PC-3 (cell line): ENCODE measurements at regions of chr20 and their contacts with region 1.

Region 1: GRCh38 chr20:3173610-3174441 is 477 bp upstream of the LZTS3 start:
- DNase-seq: peak; percentile 91
- ATAC-seq: peak; percentile 82
- H3K4me3 ChIP-seq: peak overlapping the region; percentile 92
- H3K27ac ChIP-seq: no peak overlapping the region
- H3K4me1 ChIP-seq: peaks cover 12% of the 10 kb centered on the region
- H3K27me3 ChIP-seq: no peaks in the 10 kb centered on the region
- CTCF ChIP-seq: no peak

Region 2: GRCh38 chr20:3146732-3147341 is 27.0 kb before region 1 on chr20:
- CTCF ChIA-PET with region 1: interaction called, 12 read pairs
- POLR2A ChIA-PET with region 1: no interaction called
- intact Hi-C with region 1: no loop called
- DNase-seq: no peak
- ATAC-seq: no peak
- H3K4me3 ChIP-seq: no peak overlapping the region
- H3K27ac ChIP-seq: no peak overlapping the region
- H3K4me1 ChIP-seq: no peaks in the 10 kb centered on the region
- H3K27me3 ChIP-seq: no peaks in the 10 kb centered on the region
- CTCF ChIP-seq: no peak

Region 3: DNA sequence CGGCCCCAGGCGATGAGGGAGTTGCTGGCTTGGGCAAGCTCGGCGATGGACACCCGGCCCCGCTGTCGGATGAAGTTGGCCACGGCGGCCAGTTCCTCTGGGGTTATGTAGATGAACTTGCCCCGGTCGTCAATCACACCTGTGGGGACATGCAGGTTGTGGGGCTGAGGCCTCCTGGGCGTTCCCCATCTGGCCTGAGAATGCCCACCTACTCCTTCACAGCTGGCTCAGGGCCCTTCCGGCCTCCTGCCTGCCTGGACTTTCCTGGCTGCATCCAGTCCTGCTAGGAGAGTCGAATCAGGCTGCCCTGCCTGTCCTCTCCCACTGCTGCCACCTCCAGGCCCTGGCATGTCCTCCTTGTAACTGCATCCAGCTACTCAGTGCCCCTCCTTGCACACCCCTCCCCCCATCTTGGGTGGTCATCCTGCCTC is 16.9 kb after region 1 on chr20:
- CTCF ChIA-PET with region 1: no interaction called
- POLR2A ChIA-PET with region 1: no interaction called
- intact Hi-C with region 1: no loop called
- DNase-seq: no peak
- ATAC-seq: no peak
- H3K4me3 ChIP-seq: no peak overlapping the region
- H3K27ac ChIP-seq: no peak overlapping the region
- H3K4me1 ChIP-seq: no peaks in the 10 kb centered on the region
- H3K27me3 ChIP-seq: no peaks in the 10 kb centered on the region
- CTCF ChIP-seq: no peak

Region 4: DNA sequence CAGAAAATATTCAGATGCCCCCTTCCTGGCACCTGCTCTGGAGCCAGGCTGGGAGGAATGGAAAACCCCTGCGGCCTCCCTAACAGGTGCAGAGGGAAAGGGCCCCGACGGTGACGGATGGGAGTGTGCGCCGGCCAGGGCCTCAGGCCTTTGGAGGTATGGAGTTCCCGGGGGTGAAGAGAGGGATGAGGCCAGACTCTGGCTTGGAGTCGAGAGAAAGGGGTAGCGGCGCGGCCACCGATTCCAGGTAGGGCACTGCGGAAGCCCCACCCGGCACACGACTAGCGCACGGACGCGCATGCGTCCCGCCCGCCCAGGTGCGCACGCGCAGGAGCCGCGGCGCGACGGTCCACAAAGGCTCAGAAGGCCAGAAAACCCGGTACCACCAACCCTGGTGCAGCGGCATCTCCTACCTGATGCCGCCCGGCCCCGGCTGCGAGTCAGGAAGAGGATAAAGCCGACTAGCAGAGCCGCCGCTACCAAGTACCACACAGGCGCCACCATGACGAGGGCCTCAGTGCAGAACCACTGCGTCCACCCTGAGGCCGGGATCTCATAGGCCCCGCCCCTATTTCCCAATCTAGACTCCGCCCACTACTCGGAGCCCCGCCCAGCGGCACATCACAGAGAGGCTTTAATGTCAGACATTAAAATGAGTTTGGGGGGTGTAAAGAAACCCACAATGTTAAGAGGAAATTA is 30.4 kb after region 1 on chr20 and contains the start of gene DDRGK1:
- CTCF ChIA-PET with region 1: no interaction called
- POLR2A ChIA-PET with region 1: no interaction called
- intact Hi-C with region 1: loop called (anchors 1 kb)
- DNase-seq: peak; percentile 91
- ATAC-seq: peak; percentile 82
- H3K4me3 ChIP-seq: peak within 1 kb of the TSS; percentile 84
- H3K27ac ChIP-seq: peak within 1 kb of the TSS; percentile 60
- H3K4me1 ChIP-seq: peaks cover 14% of the 10 kb centered on the region
- H3K27me3 ChIP-seq: no peaks in the 10 kb centered on the region
- CTCF ChIP-seq: no peak
- total RNA-seq, gene DDRGK1: 97.7 and 122 TPM in 2 replicates

Region 5: DNA sequence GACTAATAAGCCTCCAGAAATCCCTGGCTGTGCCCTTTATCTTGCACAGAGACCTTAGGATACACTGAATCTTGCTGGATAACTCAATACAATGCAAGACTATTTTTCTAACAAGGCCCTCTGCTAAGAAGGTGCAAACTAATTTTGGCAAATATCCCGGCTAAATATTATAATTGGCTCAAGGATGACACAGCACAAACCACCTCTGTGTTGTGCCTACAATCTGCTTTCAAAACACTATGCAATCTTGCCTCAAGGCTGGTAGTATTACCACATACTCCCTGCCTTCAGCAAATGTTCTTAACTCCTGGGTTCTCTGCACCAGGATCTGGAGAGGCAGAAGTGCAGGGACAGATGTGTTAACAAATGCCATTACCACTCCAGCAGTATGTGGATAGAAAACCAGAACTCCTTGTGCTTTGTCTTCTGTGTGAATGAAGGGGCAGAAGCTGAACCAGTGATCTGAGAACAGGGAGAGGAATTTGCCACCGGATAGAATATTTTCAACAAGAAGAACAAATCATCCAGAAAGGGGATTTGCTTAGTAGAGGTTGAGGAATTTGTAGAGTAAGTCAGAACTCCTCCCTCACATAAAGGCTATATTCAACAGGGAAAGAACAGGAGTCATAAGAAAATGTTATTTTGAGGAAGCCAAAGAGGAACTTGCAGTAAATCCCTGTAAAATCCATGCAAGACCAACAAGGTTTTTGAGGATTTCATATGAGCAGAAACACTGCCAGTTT is 139.3 kb after region 1 on chr20:
- CTCF ChIA-PET with region 1: interaction called, 23 read pairs
- POLR2A ChIA-PET with region 1: no interaction called
- intact Hi-C with region 1: no loop called
- DNase-seq: peak; percentile 9
- ATAC-seq: peak; percentile 37; the same call in 1 of the 2 replicates
- H3K4me3 ChIP-seq: no peak overlapping the region
- H3K27ac ChIP-seq: no peak overlapping the region
- H3K4me1 ChIP-seq: peaks cover 13% of the 10 kb centered on the region
- H3K27me3 ChIP-seq: no peaks in the 10 kb centered on the region
- CTCF ChIP-seq: no peak